HepG2 (cell line): ENCODE measurements at regions of chr1 and their contacts with region 1.

Region 1: DNA sequence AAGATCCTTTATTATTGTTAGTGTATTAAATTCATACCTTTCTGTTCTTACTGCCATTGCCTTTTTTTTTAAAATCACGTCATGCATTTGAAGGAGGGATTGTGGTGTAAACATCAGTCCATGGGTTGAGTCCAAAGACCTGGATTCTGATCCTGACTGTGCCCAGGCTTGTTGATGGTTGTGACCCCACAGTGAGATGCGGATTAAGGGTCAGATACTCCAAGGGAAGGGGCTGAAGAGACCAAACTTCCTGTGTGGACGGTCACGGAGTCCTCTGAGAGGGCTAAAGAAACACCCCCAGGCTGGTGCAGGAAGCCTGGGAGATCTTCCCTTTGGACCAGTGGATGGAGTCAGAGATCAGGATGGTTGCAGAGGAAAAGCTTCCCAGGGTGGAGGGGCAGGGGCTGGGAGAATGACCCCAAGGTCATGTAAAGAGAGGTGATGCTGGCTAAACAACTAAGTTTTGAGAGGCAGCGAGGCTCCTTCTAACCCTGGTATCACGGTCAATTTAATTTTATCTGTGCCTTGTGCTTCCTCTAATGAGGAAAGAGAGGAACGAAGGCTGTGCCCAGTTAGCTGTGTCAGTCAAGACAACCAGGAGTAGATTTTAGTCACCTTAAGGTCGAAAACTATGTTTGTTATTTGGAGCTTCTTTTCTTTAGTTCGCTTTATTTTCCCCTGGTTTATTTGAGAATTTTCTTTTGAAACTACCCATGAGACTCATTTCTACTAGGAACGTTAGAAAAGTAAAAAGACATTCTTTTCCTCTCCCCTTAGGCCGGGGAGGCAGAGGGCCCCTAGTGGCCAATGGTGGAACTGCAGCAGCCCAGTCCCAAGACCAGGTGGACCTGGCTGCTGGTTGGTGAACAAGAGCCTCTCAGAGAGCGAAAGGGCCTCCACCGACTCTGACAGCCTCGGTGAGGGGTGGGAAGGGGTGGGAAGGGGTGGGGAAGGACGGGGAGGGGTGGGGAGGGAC is 8.7 kb upstream of the GPR161 start:
- DNase-seq: peak; percentile 75
- ATAC-seq: peak; percentile 99
- H3K4me3 ChIP-seq: peak overlapping the region in 2 of 3 experiments; percentile 1 to 11; a peak in 3 of 6 replicates
- H3K27ac ChIP-seq: no peak overlapping the region
- H3K4me1 ChIP-seq: peaks cover 10% of the 10 kb centered on the region
- H3K27me3 ChIP-seq: no peaks in the 10 kb centered on the region
- CTCF ChIP-seq: peak; percentile 84
- EP300 ChIP-seq: no peak
- POLR2A ChIP-seq: no peak
- RAD21 ChIP-seq: no peak

Region 2: DNA sequence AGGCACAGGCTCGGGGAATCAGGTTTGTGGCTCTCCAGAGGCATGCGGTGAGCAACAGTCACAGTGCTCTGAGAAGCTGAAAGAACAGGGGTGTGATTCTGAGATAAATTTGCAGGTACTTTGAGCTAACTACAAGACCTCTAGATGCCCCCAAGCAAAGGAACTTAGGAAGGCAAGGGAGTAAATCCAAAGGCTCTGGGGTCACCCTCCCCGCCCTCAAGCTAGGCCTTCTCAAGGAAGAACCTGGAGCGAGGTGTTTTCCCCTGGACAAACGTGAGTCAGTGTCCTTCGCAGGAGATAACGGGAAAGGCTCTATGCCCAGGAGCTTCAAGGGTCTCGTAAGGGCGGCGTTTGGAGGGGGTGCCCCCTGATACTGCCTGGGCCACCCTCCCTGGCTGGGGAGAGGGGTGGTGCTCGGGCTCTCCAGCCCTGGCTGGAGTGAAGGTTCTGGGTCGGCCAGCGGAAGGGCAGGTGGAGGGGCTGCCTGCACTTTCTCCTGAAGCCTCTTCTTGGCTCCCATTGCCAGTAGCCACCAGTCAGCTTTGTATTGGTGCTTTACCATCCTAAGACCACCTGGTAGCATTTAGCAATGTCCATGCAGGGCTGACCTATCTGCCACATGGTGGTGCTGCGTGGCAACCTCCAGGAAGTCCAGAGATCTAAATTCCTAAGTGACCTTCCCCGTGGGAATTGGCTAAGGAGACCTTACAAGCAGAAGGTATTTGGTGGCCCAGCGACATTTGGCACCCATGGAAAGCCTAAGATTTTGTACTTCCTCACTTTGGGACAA is 52.7 kb before region 1 on chr1:
- CTCF ChIA-PET with region 1: interaction called, 7 read pairs
- POLR2A ChIA-PET with region 1: no interaction called
- in situ Hi-C with region 1: no loop called
- intact Hi-C with region 1: loop called (anchors 5 kb)
- DNase-seq: peak; percentile 46
- ATAC-seq: peak; percentile 82
- H3K4me3 ChIP-seq: no peak overlapping the region
- H3K27ac ChIP-seq: no peak overlapping the region
- H3K4me1 ChIP-seq: no peaks in the 10 kb centered on the region
- H3K27me3 ChIP-seq: 0 out of 5 replicates have a peak, but pooled peaks cover 2 to 4% of the 10 kb centered on the region in 2 experiments
- CTCF ChIP-seq: peak; percentile 82
- EP300 ChIP-seq: no peak
- POLR2A ChIP-seq: no peak
- RAD21 ChIP-seq: peak; percentile 58; the same call in 1 of the 2 replicates